ENCODE measurements at regions of chr1 and their contacts with region 1.

Region 1: DNA sequence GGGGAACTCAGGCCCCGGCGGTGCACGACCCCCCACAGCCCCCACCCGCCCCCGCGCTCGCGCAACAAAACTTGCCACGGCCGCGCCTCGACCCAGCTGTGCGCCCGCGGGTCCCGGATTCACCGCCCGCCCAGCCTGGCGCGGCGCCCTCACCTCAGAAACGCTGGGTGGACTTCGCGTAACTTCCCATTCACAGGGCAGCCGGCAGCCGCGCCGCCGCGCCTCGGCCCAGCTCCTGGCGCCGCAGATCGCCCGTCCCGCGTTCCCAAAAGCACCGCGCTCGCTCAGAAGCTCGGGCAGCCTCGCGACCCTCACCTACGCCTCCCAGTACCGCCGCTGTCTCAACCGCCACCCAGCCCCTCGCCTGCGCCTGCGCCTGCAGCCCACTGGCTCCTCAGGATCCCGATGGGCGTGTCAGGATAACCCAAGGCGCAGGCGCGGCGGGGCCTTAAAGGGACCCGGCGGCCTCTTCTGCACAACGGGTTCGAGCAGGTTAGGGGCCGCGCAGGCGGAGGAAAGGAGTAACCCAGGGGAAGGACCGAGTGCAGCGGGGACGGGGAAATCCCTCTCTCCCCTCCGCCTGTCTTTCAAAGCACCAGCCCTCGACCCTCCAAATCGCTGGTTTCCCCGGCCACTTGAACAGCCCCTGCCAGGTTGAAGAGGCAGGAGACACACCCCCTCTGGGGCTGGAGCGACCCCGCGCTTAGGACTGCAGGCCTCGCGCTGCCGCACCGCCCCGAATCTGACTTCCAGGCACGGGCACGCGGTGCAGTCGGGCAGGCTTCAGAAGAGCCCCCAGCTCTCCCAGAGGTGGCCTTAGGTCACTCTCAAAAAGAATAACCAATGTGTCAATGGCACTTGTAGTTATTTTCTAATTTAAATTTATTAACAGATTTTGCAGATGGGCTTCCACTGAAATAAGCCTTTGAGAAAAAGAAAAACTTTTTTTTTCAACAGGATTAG is at the start of gene NBPF1:
- DNase-seq: peak; percentile 94 to 100
- ATAC-seq: peak; percentile 98 to 99 (median 99)
- H3K4me3 ChIP-seq: peak within 1 kb of the TSS; percentile 37 to 79 (median 60)
- H3K27ac ChIP-seq: peak within 1 kb of the TSS; percentile 52 to 90 (median 84)
- H3K4me1 ChIP-seq: peaks cover 6 to 26% (median 20%) of the 10 kb centered on the region in 9 donors
- H3K27me3 ChIP-seq: peaks cover 0 to 33% (median 0%) of the 10 kb centered on the region in 7 donors
- CTCF ChIP-seq: peak in 4 of 9 donors; percentile 4 to 20 (median 10)
- total RNA-seq, gene NBPF1: 6.0 to 15.2 (median 12.2) TPM

Region 2: GRCh38 chr1:16521288-16521583 is 92.2 kb before region 1 on chr1:
- intact Hi-C with region 1: loop called in 1 of 10 experiments (anchors 10 kb)
- DNase-seq: no peak
- ATAC-seq: no peak
- H3K4me3 ChIP-seq: peak overlapping the region in 1 of 10 donors; percentile 10
- H3K27ac ChIP-seq: no peak overlapping the region
- H3K4me1 ChIP-seq: peaks cover 0 to 6% (median 0%) of the 10 kb centered on the region in 9 donors
- H3K27me3 ChIP-seq: peaks cover 0 to 68% (median 39%) of the 10 kb centered on the region in 7 donors
- CTCF ChIP-seq: no peak

Region 3: DNA sequence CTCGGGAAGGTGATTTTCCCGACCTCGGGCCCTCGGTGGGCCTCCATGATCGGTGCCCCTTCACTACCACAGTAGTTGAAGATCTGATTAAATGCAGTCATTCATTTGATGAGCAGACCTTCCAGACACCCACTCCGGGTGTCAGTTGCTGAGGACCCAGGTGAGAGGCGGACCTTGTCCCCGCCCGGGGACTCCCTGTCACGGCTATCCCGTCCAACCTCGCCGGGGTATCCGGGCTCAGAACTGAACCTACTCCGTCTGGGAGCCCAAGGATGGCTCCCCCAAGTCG is 30.7 kb after region 1 on chr1:
- intact Hi-C with region 1: loop called in 1 of 10 experiments (anchors 2 kb)
- DNase-seq: no peak
- ATAC-seq: peak in 3 of 8 donors; percentile 32 to 52 (median 43)
- H3K4me3 ChIP-seq: peak overlapping the region; percentile 61 to 89 (median 74)
- H3K27ac ChIP-seq: peak overlapping the region; percentile 30 to 94 (median 84)
- H3K4me1 ChIP-seq: peaks cover 15 to 41% (median 29%) of the 10 kb centered on the region in 9 donors
- H3K27me3 ChIP-seq: peaks cover 0 to 16% (median 11%) of the 10 kb centered on the region in 7 donors
- CTCF ChIP-seq: no peak

Region 4: DNA sequence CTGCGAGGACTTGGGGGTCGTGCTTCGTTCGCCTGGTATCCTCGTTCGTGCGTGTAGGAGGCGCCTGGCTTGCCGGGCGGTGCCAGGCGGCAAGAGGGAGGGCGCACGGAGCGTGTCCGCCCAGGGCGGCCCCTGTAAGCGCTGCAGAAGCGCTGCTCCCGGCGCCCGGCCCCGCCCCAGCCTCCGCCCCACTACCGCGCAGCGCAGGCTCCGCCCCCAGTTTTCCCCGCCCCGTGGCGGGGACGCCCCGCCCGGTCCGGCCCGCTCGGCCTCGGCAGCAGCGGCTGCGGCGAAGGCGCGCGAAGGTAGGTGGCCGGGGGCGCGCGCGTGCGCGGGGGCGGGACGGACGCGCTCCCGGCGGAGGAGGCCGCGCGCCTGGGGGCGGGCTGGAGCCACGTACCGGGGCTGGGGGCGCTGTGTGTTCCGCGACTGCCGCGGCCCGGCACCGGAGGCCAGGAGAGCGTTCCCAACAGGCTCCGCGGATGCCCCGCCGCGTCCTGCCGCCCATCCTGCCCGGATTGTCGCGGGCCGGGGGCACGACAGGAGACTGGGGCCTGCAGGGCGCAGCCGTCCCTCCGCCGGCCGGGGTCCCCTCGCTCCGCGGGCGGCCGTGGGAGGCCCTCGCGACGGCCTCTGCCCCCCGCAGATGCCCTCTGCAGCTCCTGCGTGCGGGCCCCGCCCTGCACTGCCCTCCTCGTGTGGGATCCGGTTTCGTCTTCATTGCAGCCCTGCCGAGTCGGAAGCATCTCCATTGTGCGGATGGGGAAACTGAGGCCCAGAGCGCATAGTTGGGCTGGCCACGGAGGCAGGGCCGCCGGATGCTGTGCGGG is 300.6 kb after region 1 on chr1:
- intact Hi-C with region 1: loop called in 1 of 10 experiments (anchors 5 kb)
- DNase-seq: peak; percentile 89 to 98
- ATAC-seq: peak; percentile 96 to 98 (median 97)
- H3K4me3 ChIP-seq: peak overlapping the region; percentile 82 to 99 (median 96)
- H3K27ac ChIP-seq: peak overlapping the region; percentile 74 to 94 (median 90)
- H3K4me1 ChIP-seq: peaks cover 3 to 33% (median 13%) of the 10 kb centered on the region in 9 donors
- H3K27me3 ChIP-seq: no peaks in the 10 kb centered on the region
- CTCF ChIP-seq: peak in 3 of 9 donors; percentile 18 to 36 (median 30)

Region 5: DNA sequence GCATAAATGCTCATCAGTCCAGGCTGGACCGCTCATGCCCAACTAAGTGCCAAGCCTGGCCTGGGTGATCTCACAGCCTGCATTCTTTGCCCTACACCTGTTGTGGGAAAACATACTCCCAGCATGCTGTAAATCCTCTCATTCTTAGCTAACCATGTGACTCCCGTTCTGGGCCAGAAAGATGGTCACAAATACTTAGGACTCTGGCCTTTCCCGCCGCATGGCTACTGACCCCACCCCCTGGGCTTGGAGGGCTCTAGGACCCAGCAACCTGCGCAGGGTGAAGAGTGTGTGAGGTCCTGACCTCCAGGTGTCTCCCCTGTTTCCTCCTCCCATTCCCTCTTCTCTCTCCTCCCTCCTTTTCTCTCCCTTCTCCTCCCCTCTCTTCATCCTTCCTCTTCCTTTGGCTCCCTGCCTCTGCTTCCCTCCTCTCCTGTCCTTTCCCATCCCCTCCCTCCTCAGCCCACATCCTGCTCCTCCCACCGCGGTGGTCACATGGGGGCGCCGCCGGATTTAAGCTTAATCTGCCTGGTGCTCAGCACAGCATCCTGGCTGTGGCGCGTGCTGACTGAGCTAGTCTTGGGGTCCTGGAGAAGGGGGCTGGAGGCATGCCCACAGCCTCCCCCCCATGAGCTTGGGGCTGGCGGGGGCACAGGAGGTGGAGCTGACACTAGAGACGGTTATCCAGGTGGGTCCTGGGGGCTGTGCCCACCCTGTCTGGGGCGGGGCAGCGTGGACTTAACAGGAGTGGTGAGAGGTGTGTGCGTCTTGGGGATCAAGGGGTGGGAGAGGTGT is 308.1 kb after region 1 on chr1 and contains the start of gene CROCC:
- intact Hi-C with region 1: loop called in 1 of 10 experiments (anchors 10 kb)
- DNase-seq: peak in 1 of 2 donors; percentile 42
- ATAC-seq: peak in 6 of 8 donors; percentile 24 to 54 (median 38)
- H3K4me3 ChIP-seq: no peak within 1 kb of the TSS
- H3K27ac ChIP-seq: no peak within 1 kb of the TSS
- H3K4me1 ChIP-seq: peaks cover 0 to 17% (median 9%) of the 10 kb centered on the region in 9 donors
- H3K27me3 ChIP-seq: no peaks in the 10 kb centered on the region
- CTCF ChIP-seq: no peak
- total RNA-seq, gene CROCC: 4.7 to 12.8 (median 6.0) TPM

Region 6: DNA sequence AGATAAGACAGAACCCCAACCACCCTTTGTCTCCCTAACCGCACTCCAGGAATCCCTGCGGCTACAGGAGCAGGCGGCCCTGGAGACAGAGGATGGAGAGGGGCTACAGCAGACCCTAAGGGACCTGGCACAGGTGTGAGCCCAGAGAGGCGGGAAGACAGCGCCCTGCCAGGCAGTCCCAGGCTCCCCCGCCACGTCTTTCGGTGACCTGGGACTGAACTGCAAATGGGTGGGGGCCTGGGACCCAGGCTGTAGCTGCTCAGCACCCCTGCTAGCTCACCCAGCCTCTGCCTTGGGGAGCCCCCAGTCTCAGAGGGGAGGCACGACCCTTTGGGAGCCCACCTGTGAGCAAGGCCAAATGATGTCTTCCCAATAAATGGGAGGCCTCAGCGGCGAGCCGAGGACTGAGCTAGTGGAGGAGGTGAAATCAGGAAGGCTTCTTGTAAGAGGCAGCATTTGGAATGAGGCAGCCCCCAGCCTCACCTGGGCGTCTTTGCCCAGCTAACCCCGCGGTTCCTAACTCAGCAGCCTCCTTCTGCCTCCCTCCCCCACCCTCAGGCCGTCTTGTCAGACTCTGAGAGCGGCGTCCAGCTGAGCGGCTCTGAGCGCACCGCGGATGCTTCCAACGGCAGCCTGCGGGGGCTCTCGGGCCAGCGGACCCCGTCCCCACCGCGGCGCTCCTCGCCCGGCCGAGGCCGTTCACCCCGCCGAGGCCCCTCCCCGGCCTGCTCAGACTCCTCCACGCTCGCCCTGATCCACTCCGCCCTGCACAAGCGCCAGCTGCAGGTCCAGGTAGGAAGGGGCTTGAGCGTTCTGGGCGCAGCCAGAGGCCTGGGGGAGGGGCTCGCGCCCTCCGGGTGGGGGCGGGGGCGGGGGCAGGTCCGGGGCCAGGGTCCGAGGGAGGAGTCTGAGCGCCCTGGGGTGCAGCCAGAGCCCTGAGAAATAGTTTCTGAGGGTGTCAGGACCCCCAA is 325.2 kb after region 1 on chr1:
- intact Hi-C with region 1: loop called in 1 of 10 experiments (anchors 2 kb)
- DNase-seq: no peak
- ATAC-seq: peak in 2 of 8 donors; percentile 7 to 15
- H3K4me3 ChIP-seq: no peak overlapping the region
- H3K27ac ChIP-seq: no peak overlapping the region
- H3K4me1 ChIP-seq: no peaks in the 10 kb centered on the region
- H3K27me3 ChIP-seq: no peaks in the 10 kb centered on the region
- CTCF ChIP-seq: no peak